ENCODE measurements at regions of chr17 and their contacts with region 1.

Region 1: DNA sequence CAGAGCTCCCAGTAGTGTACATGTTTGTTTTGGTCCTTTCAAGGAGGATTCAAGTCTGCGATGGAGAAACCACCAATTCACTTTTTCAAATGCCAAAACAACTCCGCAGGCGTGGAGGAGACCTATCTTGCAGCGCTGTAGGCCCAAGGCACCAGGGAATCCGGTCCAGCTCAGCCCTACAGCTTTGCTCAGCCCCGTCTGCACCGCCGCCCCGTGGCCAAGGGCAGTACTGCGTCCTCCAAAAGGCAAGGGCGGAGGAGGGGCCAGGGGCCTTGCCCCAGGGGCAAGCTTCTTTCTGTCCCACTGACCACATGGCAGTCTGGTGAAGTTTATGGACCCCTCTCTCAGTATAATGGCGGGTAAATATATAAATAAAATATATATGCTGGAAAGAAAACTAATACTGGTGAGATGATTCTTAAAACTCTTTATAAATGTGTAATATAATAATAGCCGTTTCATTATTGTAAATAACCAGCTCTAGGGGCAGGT is 709 bp upstream of the CD300LG start:
- DNase-seq: peak; percentile 87 to 97
- ATAC-seq: peak; percentile 77 to 89
- H3K4me3 ChIP-seq: no peak overlapping the region
- H3K27ac ChIP-seq: peak overlapping the region in 1 of 2 experiments; percentile 62; a peak in 4 of 6 replicates
- H3K4me1 ChIP-seq: peaks cover 19% of the 10 kb centered on the region
- CTCF ChIP-seq: peak; percentile 92
- EP300 ChIP-seq: no peak
- POLR2A ChIP-seq: no peak
- RAD21 ChIP-seq: peak; percentile 80 to 82

Region 2: DNA sequence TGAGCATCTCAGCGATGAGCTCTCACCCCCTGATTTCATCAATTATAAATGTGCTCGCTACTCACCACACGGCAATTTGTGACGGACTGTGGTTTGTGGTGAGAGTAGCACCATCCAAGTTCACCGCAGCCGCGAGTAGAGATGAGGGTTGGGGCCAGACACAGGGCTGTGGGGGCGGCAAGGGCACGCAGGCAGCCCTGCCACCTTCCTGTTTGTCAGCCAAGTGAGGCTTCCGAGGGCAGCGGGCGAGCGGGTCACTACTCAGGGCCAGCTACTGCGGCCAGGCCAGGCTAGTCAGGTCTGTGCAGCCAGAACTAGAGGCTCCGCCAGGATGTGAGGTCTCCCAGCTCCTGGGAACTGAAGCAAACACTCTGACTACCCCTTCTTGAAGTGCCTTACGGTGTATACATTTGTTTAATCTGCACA is 144.9 kb before region 1 on chr17:
- CTCF ChIA-PET with region 1: interaction called, 31 read pairs
- POLR2A ChIA-PET with region 1: no interaction called
- DNase-seq: no peak
- ATAC-seq: no peak
- H3K4me3 ChIP-seq: no peak overlapping the region
- H3K27ac ChIP-seq: peak overlapping the region in 1 of 2 experiments; percentile 60; a peak in 3 of 6 replicates
- H3K4me1 ChIP-seq: peaks cover 22% of the 10 kb centered on the region
- CTCF ChIP-seq: no peak
- EP300 ChIP-seq: no peak
- POLR2A ChIP-seq: no peak
- RAD21 ChIP-seq: no peak

Region 3: GRCh38 chr17:43778337-43779144 is 67.7 kb before region 1 on chr17 and contains the start of gene DUSP3:
- CTCF ChIA-PET with region 1: interaction called, 54 read pairs
- POLR2A ChIA-PET with region 1: interaction called, 16 read pairs
- DNase-seq: peak; percentile 96 to 97
- ATAC-seq: peak; percentile 90 to 93
- H3K4me3 ChIP-seq: peak within 1 kb of the TSS; percentile 71
- H3K27ac ChIP-seq: peak within 1 kb of the TSS; percentile 93 to 98
- H3K4me1 ChIP-seq: peaks cover 16% of the 10 kb centered on the region
- CTCF ChIP-seq: no peak
- EP300 ChIP-seq: no peak
- POLR2A ChIP-seq: peak; percentile 72
- RAD21 ChIP-seq: no peak
- polyA plus RNA-seq, gene DUSP3: 60.2 and 62.2 TPM in 2 replicates

Region 4: DNA sequence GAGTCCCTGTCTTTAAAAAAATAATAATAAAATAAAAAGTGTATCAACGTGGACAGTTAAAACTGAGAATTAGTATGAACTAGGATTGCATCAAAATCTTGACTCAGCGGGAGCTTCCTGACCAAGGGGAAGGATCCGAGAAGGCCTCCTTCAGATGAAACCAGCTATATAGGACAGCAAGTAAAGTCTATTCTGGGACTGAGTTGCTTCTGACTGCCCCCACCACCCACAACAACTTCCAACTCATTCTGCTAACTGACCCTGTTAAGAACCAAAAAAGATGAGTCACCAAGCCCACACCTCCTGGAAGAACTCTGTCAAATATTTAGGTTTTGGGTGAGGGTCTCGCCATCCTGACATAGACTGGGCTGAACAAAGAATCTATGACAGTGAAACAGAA is 38.2 kb before region 1 on chr17:
- CTCF ChIA-PET with region 1: interaction called, 19 read pairs
- POLR2A ChIA-PET with region 1: no interaction called
- DNase-seq: no peak
- ATAC-seq: no peak
- H3K4me3 ChIP-seq: no peak overlapping the region
- H3K27ac ChIP-seq: no peak overlapping the region
- H3K4me1 ChIP-seq: no peaks in the 10 kb centered on the region
- CTCF ChIP-seq: no peak
- EP300 ChIP-seq: no peak
- POLR2A ChIP-seq: no peak
- RAD21 ChIP-seq: no peak

Region 5: GRCh38 chr17:43832976-43833829 is 13.1 kb before region 1 on chr17 and contains the start of gene MPP3:
- CTCF ChIA-PET with region 1: interaction called, 31 read pairs
- POLR2A ChIA-PET with region 1: no interaction called
- DNase-seq: peak; percentile 78 to 94
- ATAC-seq: peak; percentile 84 to 91
- H3K4me3 ChIP-seq: peak within 1 kb of the TSS; percentile 80
- H3K27ac ChIP-seq: peak within 1 kb of the TSS; percentile 91 to 98
- H3K4me1 ChIP-seq: peaks cover 24% of the 10 kb centered on the region
- CTCF ChIP-seq: no peak
- EP300 ChIP-seq: no peak
- POLR2A ChIP-seq: peak; percentile 72
- RAD21 ChIP-seq: no peak
- polyA plus RNA-seq, gene MPP3: 15.5 and 20.3 TPM in 2 replicates

Region 6: GRCh38 chr17:43891851-43892646 is 45.8 kb after region 1 on chr17:
- CTCF ChIA-PET with region 1: interaction called, 11 read pairs
- POLR2A ChIA-PET with region 1: no interaction called
- DNase-seq: no peak
- ATAC-seq: no peak
- H3K4me3 ChIP-seq: no peak overlapping the region
- H3K27ac ChIP-seq: no peak overlapping the region
- H3K4me1 ChIP-seq: no peaks in the 10 kb centered on the region
- CTCF ChIP-seq: no peak
- EP300 ChIP-seq: no peak
- POLR2A ChIP-seq: no peak
- RAD21 ChIP-seq: no peak